ENCODE measurements at regions of chr18 and their contacts with region 1.

Region 1: GRCh38 chr18:65365245-65365980 is 385.4 kb upstream of the CDH7 start:
- DNase-seq: no peak
- H3K4me3 ChIP-seq: no peak overlapping the region
- H3K4me3 Mint-ChIP-seq: no peak overlapping the region
- H3K27ac Mint-ChIP-seq: no peak overlapping the region
- H3K4me1 ChIP-seq: no peaks in the 10 kb centered on the region
- H3K4me1 Mint-ChIP-seq: no peaks in the 10 kb centered on the region
- H3K27me3 ChIP-seq: no peaks in the 10 kb centered on the region
- H3K27me3 Mint-ChIP-seq: no peaks in the 10 kb centered on the region
- CTCF ChIP-seq: no peak

Region 2: GRCh38 chr18:65347446-65347845 is 18.0 kb before region 1 on chr18:
- CTCF ChIA-PET with region 1: no interaction called
- POLR2A ChIA-PET with region 1: no interaction called
- intact Hi-C with region 1: loop called (anchors 2 kb)
- DNase-seq: no peak
- H3K4me3 ChIP-seq: no peak overlapping the region
- H3K4me3 Mint-ChIP-seq: no peak overlapping the region
- H3K27ac Mint-ChIP-seq: no peak overlapping the region
- H3K4me1 ChIP-seq: no peaks in the 10 kb centered on the region
- H3K4me1 Mint-ChIP-seq: no peaks in the 10 kb centered on the region
- H3K27me3 ChIP-seq: no peaks in the 10 kb centered on the region
- H3K27me3 Mint-ChIP-seq: no peaks in the 10 kb centered on the region
- CTCF ChIP-seq: no peak

Region 3: GRCh38 chr18:65409261-65409660 is 43.8 kb after region 1 on chr18:
- CTCF ChIA-PET with region 1: no interaction called
- POLR2A ChIA-PET with region 1: no interaction called
- intact Hi-C with region 1: no loop called
- DNase-seq: no peak
- H3K4me3 ChIP-seq: no peak overlapping the region
- H3K4me3 Mint-ChIP-seq: no peak overlapping the region
- H3K27ac Mint-ChIP-seq: no peak overlapping the region
- H3K4me1 ChIP-seq: no peaks in the 10 kb centered on the region
- H3K4me1 Mint-ChIP-seq: no peaks in the 10 kb centered on the region
- H3K27me3 ChIP-seq: no peaks in the 10 kb centered on the region
- H3K27me3 Mint-ChIP-seq: no peaks in the 10 kb centered on the region
- CTCF ChIP-seq: no peak

Measured in Caco-2 (cell line).